Activated CD4-positive, alpha-beta T cell treated with anti-CD3 and anti-CD28 coated beads for 36 hours (primary cell): ENCODE measurements at regions of chr18 and their contacts with region 1.

Region 1: DNA sequence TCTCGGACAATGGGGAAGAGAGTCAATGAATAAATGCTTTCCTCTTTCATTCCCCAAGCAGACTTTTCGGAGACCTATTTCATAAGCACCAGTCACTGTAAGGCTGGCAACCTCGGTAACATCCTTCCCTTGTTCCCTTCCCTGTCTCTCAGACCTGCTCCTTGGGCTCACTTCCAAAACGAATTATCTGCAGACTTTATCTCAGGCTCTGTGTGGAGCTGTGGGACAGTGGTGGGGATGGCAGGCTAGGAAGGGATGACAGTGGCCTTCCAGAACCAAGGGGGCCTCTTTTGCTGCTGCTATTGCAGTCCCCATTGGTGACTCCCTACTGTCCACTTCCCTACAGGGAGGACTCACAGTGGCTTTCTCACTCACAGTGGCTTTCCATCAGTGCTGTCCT is 185.6 kb upstream of the MEX3C start:
- DNase-seq: no peak
- ATAC-seq: no peak
- H3K4me3 Mint-ChIP-seq: no peak overlapping the region
- H3K27ac Mint-ChIP-seq: no peak overlapping the region
- H3K4me1 Mint-ChIP-seq: no peaks in the 10 kb centered on the region
- H3K27me3 Mint-ChIP-seq: peaks cover 3% of the 10 kb centered on the region

Region 2: DNA sequence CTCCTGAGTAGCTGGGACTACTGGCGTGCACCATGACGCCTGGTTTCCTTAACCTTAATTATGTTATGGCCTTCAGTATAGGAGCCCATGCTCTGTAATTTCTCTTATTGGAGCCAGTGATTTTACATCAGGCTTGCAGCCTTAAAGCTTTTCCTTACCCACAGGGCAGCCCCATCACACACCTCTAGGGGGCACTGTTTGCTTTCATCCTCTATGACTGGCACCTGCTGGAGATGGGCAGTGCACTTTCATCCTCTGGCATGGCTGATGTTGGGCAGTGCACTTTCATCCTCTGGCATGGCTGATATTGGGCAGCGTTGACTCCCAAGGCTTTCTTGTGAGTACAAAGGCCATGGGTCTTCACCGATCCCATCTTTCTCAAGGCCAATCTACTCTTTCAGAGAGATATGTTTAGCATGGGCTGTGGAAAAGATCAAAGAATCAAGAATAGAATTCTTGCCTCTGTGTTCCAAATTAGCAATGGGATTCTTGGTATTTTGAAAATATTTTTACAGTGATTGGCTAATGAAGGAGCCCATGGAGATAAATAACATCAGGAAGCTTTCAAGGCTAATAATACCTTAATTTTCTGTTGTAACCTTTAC is 105.0 kb before region 1 on chr18:
- CTCF ChIA-PET with region 1: interaction called, 5 read pairs
- POLR2A ChIA-PET with region 1: no interaction called
- intact Hi-C with region 1: loop called in 1 of 2 experiments (anchors 5 kb)
- DNase-seq: peak; percentile 76
- ATAC-seq: peak; percentile 78
- H3K4me3 Mint-ChIP-seq: no peak overlapping the region
- H3K27ac Mint-ChIP-seq: no peak overlapping the region
- H3K4me1 Mint-ChIP-seq: no peaks in the 10 kb centered on the region
- H3K27me3 Mint-ChIP-seq: peaks cover 7% of the 10 kb centered on the region

Region 3: DNA sequence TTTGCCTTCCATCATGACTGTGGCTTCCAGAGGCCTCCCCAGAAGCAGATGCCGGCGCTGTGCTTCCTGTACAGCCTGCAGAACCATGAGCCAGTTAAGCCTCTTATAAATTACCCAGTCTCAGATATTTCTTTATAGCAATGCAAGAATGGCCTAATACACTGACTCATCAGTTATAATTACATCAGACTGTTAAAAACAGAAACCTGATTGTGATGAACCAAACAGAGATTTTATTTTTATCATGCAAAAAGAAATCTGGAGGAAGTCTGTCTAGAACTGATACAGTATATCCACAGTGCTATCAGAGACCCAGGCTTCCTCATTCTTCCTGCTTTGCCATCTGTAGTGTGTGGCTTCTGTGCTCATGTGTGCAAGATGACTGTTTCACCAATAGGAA is 92.3 kb before region 1 on chr18:
- CTCF ChIA-PET with region 1: no interaction called
- POLR2A ChIA-PET with region 1: no interaction called
- intact Hi-C with region 1: no loop called
- DNase-seq: no peak
- ATAC-seq: no peak
- H3K4me3 Mint-ChIP-seq: no peak overlapping the region
- H3K27ac Mint-ChIP-seq: no peak overlapping the region
- H3K4me1 Mint-ChIP-seq: no peaks in the 10 kb centered on the region
- H3K27me3 Mint-ChIP-seq: peaks cover 13% of the 10 kb centered on the region